OCI-LY7 (cell line): ENCODE measurements at regions of chr2 and their contacts with region 1.

Region 1: GRCh38 chr2:86157009-86157556 is 38.2 kb downstream of the IMMT start:
- DNase-seq: no peak
- H3K4me3 ChIP-seq: no peak overlapping the region
- H3K27ac ChIP-seq: no peak overlapping the region
- H3K4me1 ChIP-seq: no peaks in the 10 kb centered on the region
- CTCF ChIP-seq: no peak

Region 2: GRCh38 chr2:85595301-85596025 is 561.6 kb before region 1 on chr2 and contains the start of gene RNF181:
- CTCF ChIA-PET with region 1: no interaction called
- POLR2A ChIA-PET with region 1: no interaction called
- intact Hi-C with region 1: no loop called
- DNase-seq: peak; percentile 97
- H3K4me3 ChIP-seq: peak within 1 kb of the TSS; percentile 89
- H3K27ac ChIP-seq: peak within 1 kb of the TSS; percentile 42
- H3K4me1 ChIP-seq: peaks cover 23% of the 10 kb centered on the region
- CTCF ChIP-seq: no peak
- total RNA-seq, gene RNF181: 98.4 and 179 TPM in 2 replicates

Region 3: GRCh38 chr2:86123328-86123925 is 33.7 kb before region 1 on chr2:
- CTCF ChIA-PET with region 1: no interaction called
- POLR2A ChIA-PET with region 1: no interaction called
- intact Hi-C with region 1: loop called (anchors 5 kb)
- DNase-seq: no peak
- H3K4me3 ChIP-seq: no peak overlapping the region
- H3K27ac ChIP-seq: no peak overlapping the region
- H3K4me1 ChIP-seq: no peaks in the 10 kb centered on the region
- CTCF ChIP-seq: no peak

Region 4: DNA sequence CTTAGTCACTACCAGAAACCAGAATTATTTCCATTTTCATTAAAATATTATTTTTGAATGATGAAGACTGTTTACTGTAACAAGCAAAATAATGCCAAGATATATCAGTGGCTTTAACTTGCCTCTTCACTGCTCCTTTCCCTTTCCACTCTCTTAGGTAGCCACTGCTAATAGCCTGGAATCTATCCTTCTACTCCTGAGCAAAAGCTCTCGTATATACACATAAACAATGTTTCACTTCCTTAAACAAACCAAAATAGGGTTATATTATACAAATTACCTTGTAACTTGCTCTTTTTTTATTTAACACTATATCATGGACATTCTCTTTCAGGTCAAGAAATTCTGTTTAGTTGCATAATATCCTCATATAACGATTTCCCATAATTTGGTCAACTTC is 17.4 kb after region 1 on chr2:
- CTCF ChIA-PET with region 1: no interaction called
- POLR2A ChIA-PET with region 1: no interaction called
- intact Hi-C with region 1: no loop called
- DNase-seq: no peak
- H3K4me3 ChIP-seq: no peak overlapping the region
- H3K27ac ChIP-seq: peak overlapping the region; percentile 5
- H3K4me1 ChIP-seq: peaks cover 12% of the 10 kb centered on the region
- CTCF ChIP-seq: no peak